BJ (cell line): ENCODE measurements at regions of chr2 and their contacts with region 1.

Region 1: GRCh38 chr2:26745609-26746327 is 18.3 kb upstream of the SLC35F6 start:
- DNase-seq: no peak
- H3K4me3 ChIP-seq: no peak overlapping the region
- H3K27me3 ChIP-seq: no peaks in the 10 kb centered on the region; the same call in 1 of the 2 replicates
- CTCF ChIP-seq: peak; percentile 90

Region 2: DNA sequence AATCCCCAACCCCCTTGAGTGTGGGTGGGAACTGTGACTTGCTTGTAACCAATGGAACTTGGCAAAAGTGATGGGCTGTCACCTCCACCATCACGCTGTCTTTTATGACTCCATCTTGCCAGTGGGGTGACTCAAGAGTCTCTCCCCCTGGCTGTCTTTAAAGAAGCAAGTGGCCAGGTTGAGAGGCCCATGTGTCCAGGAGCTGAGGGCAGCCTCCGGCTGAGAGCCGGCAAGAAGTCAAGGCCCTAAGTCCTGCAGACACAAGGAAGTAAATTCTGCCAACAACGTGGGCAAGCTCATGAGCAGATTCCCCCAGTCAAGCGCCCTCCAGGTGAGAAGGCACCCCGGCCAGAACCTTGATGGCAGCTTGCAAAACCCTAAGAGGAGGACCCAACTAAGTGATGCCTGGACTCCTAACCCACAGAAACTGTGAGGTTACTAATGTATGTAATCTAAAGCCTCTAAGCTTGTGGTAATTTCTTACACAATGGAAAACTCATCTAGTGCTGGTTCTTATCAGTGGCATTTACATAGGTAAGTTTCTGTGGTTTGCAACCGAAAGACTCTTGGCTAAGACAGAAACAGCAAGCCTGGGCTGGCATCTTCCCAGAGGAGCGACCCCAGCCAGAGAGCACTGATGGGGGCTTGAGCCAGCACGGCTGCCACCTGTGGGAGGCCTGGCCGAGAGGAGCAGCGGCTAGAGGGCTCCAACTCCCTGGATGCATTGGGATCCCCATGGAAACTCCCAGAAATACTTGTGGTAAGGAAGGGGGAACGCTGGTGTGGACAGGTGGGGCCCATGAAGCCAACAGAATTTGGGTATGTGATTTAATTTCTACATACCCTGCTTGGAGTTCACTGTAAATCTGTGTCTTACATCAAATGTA is 153.9 kb before region 1 on chr2:
- CTCF ChIA-PET with region 1: interaction called, 30 read pairs
- POLR2A ChIA-PET with region 1: no interaction called
- DNase-seq: no peak
- H3K4me3 ChIP-seq: no peak overlapping the region
- H3K27me3 ChIP-seq: peaks cover 29% of the 10 kb centered on the region
- CTCF ChIP-seq: no peak

Region 3: GRCh38 chr2:26605195-26605998 is 140.4 kb before region 1 on chr2:
- CTCF ChIA-PET with region 1: interaction called, 552 read pairs
- POLR2A ChIA-PET with region 1: no interaction called
- DNase-seq: no peak
- H3K4me3 ChIP-seq: no peak overlapping the region
- H3K27me3 ChIP-seq: peaks cover 6% of the 10 kb centered on the region
- CTCF ChIP-seq: peak; percentile 85

Region 4: GRCh38 chr2:26727641-26728561 is 17.9 kb before region 1 on chr2:
- CTCF ChIA-PET with region 1: interaction called, 30 read pairs
- POLR2A ChIA-PET with region 1: no interaction called
- DNase-seq: no peak
- H3K4me3 ChIP-seq: no peak overlapping the region
- H3K27me3 ChIP-seq: peaks cover 4% of the 10 kb centered on the region
- CTCF ChIP-seq: peak; percentile 38

Region 5: DNA sequence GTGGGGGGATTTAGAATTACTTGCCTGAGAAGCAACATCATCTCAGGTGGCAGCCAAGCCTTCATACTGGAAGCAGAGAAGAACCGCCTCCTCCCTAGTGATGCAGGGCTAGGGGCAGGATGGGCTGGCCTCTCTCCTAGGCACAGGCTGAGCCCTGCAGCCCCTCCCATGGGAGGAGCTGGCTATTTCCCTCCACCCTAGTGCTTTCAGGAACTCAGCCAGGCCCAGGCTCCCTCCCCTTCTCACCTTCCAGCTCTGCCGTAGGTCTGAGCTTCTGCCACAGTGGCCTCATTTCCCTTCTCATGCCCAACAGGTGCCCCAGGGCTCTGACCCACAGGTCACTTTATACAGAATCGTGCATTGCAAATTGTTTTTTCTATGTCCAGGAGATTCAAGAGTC is 71.1 kb after region 1 on chr2:
- CTCF ChIA-PET with region 1: no interaction called
- POLR2A ChIA-PET with region 1: no interaction called
- DNase-seq: no peak
- H3K4me3 ChIP-seq: no peak overlapping the region
- H3K27me3 ChIP-seq: peaks cover 7% of the 10 kb centered on the region
- CTCF ChIP-seq: no peak